ENCODE measurements at regions of chr15 and their contacts with region 1.

Region 1: GRCh38 chr15:76139368-76140073 is 79.7 kb downstream of the TMEM266 start:
- DNase-seq: peak; percentile 90
- ATAC-seq: peak; percentile 94
- H3K4me3 Mint-ChIP-seq: peak overlapping the region; percentile 13; the same call in 1 of the 2 replicates
- H3K27ac Mint-ChIP-seq: no peak overlapping the region; the same call in 1 of the 2 replicates
- H3K4me1 Mint-ChIP-seq: peaks cover 24% of the 10 kb centered on the region
- H3K27me3 Mint-ChIP-seq: no peaks in the 10 kb centered on the region; the same call in 1 of the 2 replicates
- CTCF ChIP-seq: peak; percentile 93

Region 2: GRCh38 chr15:75809986-75810750 is 329.4 kb before region 1 on chr15:
- CTCF ChIA-PET with region 1: interaction called, 48 read pairs
- POLR2A ChIA-PET with region 1: interaction called, 4 read pairs
- DNase-seq: peak; percentile 60
- ATAC-seq: peak; percentile 96
- H3K4me3 Mint-ChIP-seq: no peak overlapping the region
- H3K27ac Mint-ChIP-seq: no peak overlapping the region
- H3K4me1 Mint-ChIP-seq: peaks cover 7% of the 10 kb centered on the region
- H3K27me3 Mint-ChIP-seq: peaks cover 17% of the 10 kb centered on the region
- CTCF ChIP-seq: no peak

Region 3: DNA sequence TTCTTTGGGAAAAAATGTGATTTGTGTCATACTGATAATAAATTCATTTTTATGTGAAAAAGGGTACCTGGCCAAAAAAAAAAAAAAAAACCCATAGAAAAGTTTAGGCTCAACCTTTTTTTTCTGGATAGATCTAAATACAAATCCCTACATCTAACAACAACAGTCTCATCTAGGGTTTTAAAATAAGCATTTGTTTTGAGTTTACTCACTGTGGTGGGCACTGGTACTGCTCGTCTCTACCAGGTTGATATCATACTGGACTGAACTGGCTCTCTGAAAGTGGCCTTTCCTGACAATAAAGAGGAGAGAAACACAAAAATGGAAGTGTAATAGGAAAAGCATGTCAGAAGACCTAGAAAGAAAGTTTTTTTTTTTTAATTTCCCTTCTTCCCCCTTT is 183.8 kb before region 1 on chr15:
- CTCF ChIA-PET with region 1: interaction called, 10 read pairs
- POLR2A ChIA-PET with region 1: no interaction called
- DNase-seq: no peak
- ATAC-seq: no peak
- H3K4me3 Mint-ChIP-seq: no peak overlapping the region
- H3K27ac Mint-ChIP-seq: no peak overlapping the region
- H3K4me1 Mint-ChIP-seq: no peaks in the 10 kb centered on the region
- H3K27me3 Mint-ChIP-seq: no peaks in the 10 kb centered on the region
- CTCF ChIP-seq: no peak

Region 4: DNA sequence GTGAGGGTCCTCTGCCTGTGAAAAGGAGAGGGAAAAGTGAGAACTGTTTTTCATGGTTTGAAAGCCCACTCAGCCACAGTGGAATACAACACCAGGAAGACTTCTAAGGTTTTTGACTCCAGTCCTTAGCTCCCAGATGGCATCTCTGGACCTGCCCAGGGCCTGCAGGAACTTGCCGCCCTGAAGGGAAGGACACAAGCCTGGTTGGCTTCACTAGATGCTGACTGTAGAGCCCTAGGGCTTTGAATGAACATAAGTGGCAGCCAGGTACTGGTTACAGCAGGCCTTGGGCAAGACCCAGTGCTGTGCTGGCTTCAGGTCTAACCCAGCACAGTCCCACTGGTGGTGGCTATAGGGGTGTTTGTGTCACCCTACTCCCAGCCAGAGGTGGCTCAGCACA is 101.0 kb before region 1 on chr15:
- CTCF ChIA-PET with region 1: interaction called, 12 read pairs
- POLR2A ChIA-PET with region 1: no interaction called
- DNase-seq: no peak
- ATAC-seq: no peak
- H3K4me3 Mint-ChIP-seq: no peak overlapping the region
- H3K27ac Mint-ChIP-seq: no peak overlapping the region
- H3K4me1 Mint-ChIP-seq: peaks cover 15% of the 10 kb centered on the region
- H3K27me3 Mint-ChIP-seq: peaks cover 2% of the 10 kb centered on the region
- CTCF ChIP-seq: no peak

Region 5: GRCh38 chr15:76065267-76065666 is 74.3 kb before region 1 on chr15:
- CTCF ChIA-PET with region 1: interaction called, 250 read pairs
- POLR2A ChIA-PET with region 1: interaction called, 4 read pairs
- DNase-seq: no peak
- ATAC-seq: peak; percentile 21
- H3K4me3 Mint-ChIP-seq: no peak overlapping the region; the same call in 1 of the 2 replicates
- H3K27ac Mint-ChIP-seq: no peak overlapping the region
- H3K4me1 Mint-ChIP-seq: peaks cover 51% of the 10 kb centered on the region
- H3K27me3 Mint-ChIP-seq: peaks cover 3% of the 10 kb centered on the region
- CTCF ChIP-seq: no peak

Region 6: GRCh38 chr15:76108021-76108723 is 31.3 kb before region 1 on chr15:
- CTCF ChIA-PET with region 1: interaction called, 28 read pairs
- POLR2A ChIA-PET with region 1: no interaction called
- DNase-seq: no peak
- ATAC-seq: peak; percentile 76
- H3K4me3 Mint-ChIP-seq: no peak overlapping the region
- H3K27ac Mint-ChIP-seq: no peak overlapping the region; the same call in 1 of the 2 replicates
- H3K4me1 Mint-ChIP-seq: peaks cover 19% of the 10 kb centered on the region
- H3K27me3 Mint-ChIP-seq: no peaks in the 10 kb centered on the region
- CTCF ChIP-seq: no peak

Region 7: DNA sequence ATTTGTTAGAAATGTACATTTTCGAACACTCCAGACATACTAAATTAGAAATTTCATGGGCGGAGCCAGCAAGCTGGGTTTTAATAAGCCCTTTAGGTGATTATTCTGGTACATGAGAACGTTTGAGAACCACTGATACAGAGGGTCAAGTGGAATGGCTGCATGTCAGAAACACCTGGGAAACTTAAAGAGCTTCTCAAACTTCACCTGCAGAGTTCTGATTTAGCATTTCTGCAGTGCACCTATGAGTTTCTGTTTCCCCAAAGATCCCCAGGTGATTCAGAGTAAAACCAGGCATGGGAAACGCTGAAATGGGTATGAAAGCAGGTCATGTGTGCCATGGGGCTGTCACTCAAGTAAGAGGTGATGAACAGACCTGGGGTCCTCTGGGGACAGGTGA is 11.6 kb before region 1 on chr15:
- CTCF ChIA-PET with region 1: interaction called, 13 read pairs
- POLR2A ChIA-PET with region 1: no interaction called
- DNase-seq: no peak
- ATAC-seq: no peak
- H3K4me3 Mint-ChIP-seq: no peak overlapping the region
- H3K27ac Mint-ChIP-seq: no peak overlapping the region
- H3K4me1 Mint-ChIP-seq: 0 out of 2 replicates have a peak, but pooled peaks cover 6% of the 10 kb centered on the region
- H3K27me3 Mint-ChIP-seq: no peaks in the 10 kb centered on the region
- CTCF ChIP-seq: no peak

Region 8: DNA sequence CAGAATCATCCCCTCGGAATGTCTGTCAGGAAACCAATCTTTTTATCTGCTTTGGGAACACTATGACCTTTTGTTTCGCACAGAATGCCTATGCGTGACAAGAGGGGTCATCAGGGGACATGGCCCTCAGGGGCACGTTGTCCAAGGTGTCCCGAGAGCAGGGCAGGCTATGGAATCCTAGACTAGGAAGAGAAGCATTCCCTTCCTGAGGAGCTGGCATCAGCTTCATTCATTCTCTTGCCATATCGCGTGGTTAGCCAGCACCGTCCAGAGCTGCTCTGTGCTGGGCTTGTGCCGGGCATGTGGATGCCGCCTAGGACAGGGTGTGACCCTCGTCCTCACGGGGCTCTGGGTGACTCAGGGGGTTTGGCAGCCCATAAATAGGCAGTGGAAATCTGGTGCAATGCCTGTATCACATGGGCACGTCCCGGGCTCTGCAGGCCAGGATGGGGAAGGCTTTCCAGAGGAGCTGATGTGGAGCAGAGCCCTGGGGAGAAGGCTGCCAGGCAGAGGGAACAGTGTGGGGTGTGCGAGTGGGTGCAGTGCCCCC is 38.0 kb after region 1 on chr15:
- CTCF ChIA-PET with region 1: no interaction called
- POLR2A ChIA-PET with region 1: no interaction called
- DNase-seq: no peak
- ATAC-seq: no peak
- H3K4me3 Mint-ChIP-seq: no peak overlapping the region
- H3K27ac Mint-ChIP-seq: no peak overlapping the region
- H3K4me1 Mint-ChIP-seq: peaks cover 4% of the 10 kb centered on the region; the same call in 1 of the 2 replicates
- H3K27me3 Mint-ChIP-seq: no peaks in the 10 kb centered on the region
- CTCF ChIP-seq: no peak